ENCODE measurements at regions of chr6 and their contacts with region 1.

Region 1: DNA sequence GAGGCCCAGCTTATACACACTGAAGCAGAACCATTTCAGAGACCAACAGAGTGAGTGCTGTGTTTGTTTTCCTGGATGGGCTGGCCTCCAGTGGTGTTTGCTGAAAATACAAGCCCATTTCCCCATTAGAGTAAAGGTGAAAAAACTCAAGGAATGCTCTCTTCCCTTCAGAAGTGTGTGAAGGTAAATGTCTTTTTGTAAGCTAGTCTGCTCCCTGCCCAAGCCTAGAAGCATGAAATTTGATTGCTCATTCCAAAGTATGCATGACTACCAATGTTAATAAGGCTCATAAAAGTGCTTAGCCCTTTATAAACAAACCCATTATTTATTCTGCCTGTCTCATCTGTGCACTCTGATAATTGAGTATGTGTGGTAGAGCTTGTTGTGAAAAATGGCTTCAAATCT is 59.1 kb downstream of the ADGRF1 start:
- DNase-seq: no peak
- ATAC-seq: peak in 1 of 8 donors; percentile 52
- H3K4me3 ChIP-seq: no peak overlapping the region
- H3K27ac ChIP-seq: no peak overlapping the region
- H3K4me1 ChIP-seq: peaks cover 0 to 29% (median 3%) of the 10 kb centered on the region in 9 donors
- H3K27me3 ChIP-seq: no peaks in the 10 kb centered on the region
- CTCF ChIP-seq: peak in 3 of 9 donors; percentile 16 to 43 (median 30)

Region 2: GRCh38 chr6:46719099-46719498 is 263.9 kb before region 1 on chr6:
- intact Hi-C with region 1: no loop called
- DNase-seq: no peak
- ATAC-seq: no peak
- H3K4me3 ChIP-seq: no peak overlapping the region
- H3K27ac ChIP-seq: no peak overlapping the region
- H3K4me1 ChIP-seq: peaks cover 0 to 8% (median 0%) of the 10 kb centered on the region in 9 donors
- H3K27me3 ChIP-seq: peaks cover 0 to 20% (median 6%) of the 10 kb centered on the region in 7 donors
- CTCF ChIP-seq: no peak

Region 3: DNA sequence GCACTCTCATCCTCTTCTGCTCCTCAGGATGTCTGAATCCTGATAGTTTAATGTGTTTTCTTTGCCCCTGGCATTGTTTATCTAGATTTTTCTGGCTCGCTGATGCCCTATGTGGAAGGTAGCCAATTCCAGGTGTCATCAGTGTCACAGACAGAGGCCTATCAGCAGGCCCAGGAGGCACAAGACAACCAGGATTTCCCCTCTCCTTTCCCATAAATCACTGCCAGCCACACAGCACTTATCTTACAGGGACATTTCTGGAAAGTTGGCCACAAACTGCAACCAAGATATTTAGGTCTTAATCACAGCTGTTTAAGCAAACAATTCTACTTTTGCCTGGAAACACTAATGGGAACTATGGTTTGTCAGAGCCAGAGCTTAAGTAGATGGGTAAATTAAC is 89.4 kb before region 1 on chr6:
- intact Hi-C with region 1: loop called in 1 of 10 experiments (anchors 10 kb)
- DNase-seq: no peak
- ATAC-seq: peak in 2 of 8 donors; percentile 14 to 16
- H3K4me3 ChIP-seq: no peak overlapping the region
- H3K27ac ChIP-seq: peak overlapping the region in 4 of 10 donors; percentile 21 to 53 (median 32)
- H3K4me1 ChIP-seq: peaks cover 7 to 74% (median 35%) of the 10 kb centered on the region in 9 donors
- H3K27me3 ChIP-seq: no peaks in the 10 kb centered on the region
- CTCF ChIP-seq: no peak

Region 4: GRCh38 chr6:46903175-46903574 is 79.8 kb before region 1 on chr6:
- intact Hi-C with region 1: loop called in 4 of 10 experiments (anchors 5 to 10 kb)
- DNase-seq: peak; percentile 26 to 71
- ATAC-seq: peak; percentile 69 to 90 (median 85)
- H3K4me3 ChIP-seq: no peak overlapping the region
- H3K27ac ChIP-seq: peak overlapping the region; percentile 21 to 83 (median 63)
- H3K4me1 ChIP-seq: peaks cover 4 to 98% (median 56%) of the 10 kb centered on the region in 9 donors
- H3K27me3 ChIP-seq: no peaks in the 10 kb centered on the region
- CTCF ChIP-seq: peak in 4 of 9 donors; percentile 6 to 23 (median 16)

Region 5: GRCh38 chr6:46963626-46964025 is 19.4 kb before region 1 on chr6:
- intact Hi-C with region 1: loop called in 1 of 10 experiments (anchors 2 kb)
- DNase-seq: peak in 1 of 2 donors; percentile 56
- ATAC-seq: peak; percentile 38 to 92 (median 73)
- H3K4me3 ChIP-seq: no peak overlapping the region
- H3K27ac ChIP-seq: peak overlapping the region in 6 of 10 donors; percentile 28 to 64 (median 50)
- H3K4me1 ChIP-seq: peaks cover 0 to 37% (median 19%) of the 10 kb centered on the region in 9 donors
- H3K27me3 ChIP-seq: no peaks in the 10 kb centered on the region
- CTCF ChIP-seq: no peak

Region 6: DNA sequence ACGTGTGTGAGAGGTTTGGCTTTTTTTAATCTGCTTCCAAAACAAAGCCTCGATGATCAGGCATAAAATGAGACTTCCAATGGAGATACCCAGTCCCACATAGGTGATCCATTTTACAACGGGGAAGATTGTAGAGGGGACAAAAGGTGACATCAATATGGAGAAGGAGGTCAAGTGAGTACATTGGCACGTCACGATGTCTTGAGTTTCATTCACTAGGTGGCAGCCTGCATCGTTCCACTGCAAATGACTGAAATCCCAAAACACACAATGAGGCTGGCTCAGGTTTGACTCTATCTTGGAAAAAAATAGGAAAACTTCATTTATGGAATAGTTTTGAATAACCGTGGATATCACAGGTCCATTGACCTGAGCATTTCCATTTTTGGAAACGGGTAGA is 26.6 kb after region 1 on chr6:
- intact Hi-C with region 1: no loop called
- DNase-seq: no peak
- ATAC-seq: no peak
- H3K4me3 ChIP-seq: no peak overlapping the region
- H3K27ac ChIP-seq: no peak overlapping the region
- H3K4me1 ChIP-seq: no peaks in the 10 kb centered on the region
- H3K27me3 ChIP-seq: peaks cover 0 to 12% (median 0%) of the 10 kb centered on the region in 7 donors
- CTCF ChIP-seq: peak in 4 of 9 donors; percentile 9 to 43 (median 24)